ENCODE measurements at regions of chr6 and their contacts with region 1.

Region 1: DNA sequence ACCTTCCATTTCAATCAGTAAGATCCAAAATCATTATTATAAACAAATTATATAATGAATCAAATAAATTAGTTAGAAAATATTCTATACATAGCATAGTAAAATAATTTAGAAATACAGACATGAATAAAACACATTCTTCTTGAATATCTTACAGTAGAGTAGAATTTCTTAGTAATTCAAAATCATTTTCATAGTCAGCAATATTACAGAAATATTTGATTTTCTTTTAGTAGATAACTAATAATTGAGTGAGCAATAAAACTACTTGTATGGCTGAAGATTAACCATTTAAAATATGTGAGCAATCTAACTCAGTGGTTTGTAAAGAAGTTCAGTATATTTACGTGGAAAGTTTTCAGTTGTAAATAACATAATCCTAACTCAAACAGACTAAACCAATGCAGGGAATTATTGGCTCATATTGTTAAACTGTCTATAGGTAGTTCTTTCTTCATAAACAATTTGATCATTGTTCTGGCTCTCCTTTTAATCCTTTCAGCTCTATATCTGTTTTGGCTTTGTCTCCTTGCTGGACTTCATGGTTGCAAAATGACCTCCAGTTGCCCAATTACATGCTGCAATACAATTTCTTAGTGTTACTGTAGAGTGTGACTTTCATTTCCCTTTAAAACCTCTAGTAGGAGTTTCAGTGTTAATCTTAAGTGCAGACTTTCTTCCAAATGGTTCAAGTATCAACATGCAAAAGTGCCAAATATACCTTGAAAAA is 307.5 kb downstream of the EYS start:
- DNase-seq: no peak
- ATAC-seq: no peak

Region 2: GRCh38 chr6:63527658-63528514 is 1871.6 kb before region 1 on chr6:
- intact Hi-C with region 1: no loop called
- DNase-seq: peak; percentile 65
- ATAC-seq: peak; percentile 74

Region 3: GRCh38 chr6:65900928-65901327 is 501.4 kb after region 1 on chr6:
- intact Hi-C with region 1: loop called (anchors 5 kb)
- DNase-seq: no peak
- ATAC-seq: no peak